ENCODE measurements at regions of chr17 and their contacts with region 1.

Region 1: DNA sequence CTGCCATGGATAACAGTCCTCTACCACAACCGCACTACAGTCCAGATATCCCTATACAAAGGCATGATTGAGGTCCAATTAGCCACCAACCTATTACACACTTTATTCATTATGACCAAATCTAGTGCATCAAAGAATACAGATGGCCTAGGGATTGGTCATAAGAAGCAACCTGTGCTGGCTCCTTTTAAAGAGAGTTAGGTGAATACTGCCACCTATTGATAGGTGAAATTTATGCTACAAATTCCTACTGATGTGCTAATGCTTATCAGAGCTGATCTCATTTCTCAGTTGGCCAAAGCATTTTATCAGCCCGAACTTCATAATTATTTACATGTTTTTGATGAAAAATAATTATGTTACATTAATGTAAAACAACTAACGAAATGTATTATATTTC is 166.2 kb downstream of the ANKFN1 start:
- DNase-seq: no peak
- ATAC-seq: peak; percentile 72 to 82
- H3K4me3 ChIP-seq: no peak overlapping the region
- H3K27ac ChIP-seq: no peak overlapping the region
- H3K4me1 ChIP-seq: no peaks in the 10 kb centered on the region
- H3K27me3 ChIP-seq: peaks cover 0 to 3% (median 0%) of the 10 kb centered on the region in 3 donors
- CTCF ChIP-seq: peak; percentile 24 to 65 (median 43)
- POLR2A ChIP-seq: no peak

Region 2: GRCh38 chr17:55845385-55845784 is 474.1 kb before region 1 on chr17:
- in situ Hi-C with region 1: loop called in 1 of 4 experiments (anchors 25 kb)
- intact Hi-C with region 1: loop called (anchors 2 kb)
- DNase-seq: peak; percentile 14 to 25
- ATAC-seq: peak; percentile 53 to 66
- H3K4me3 ChIP-seq: peak overlapping the region in 2 of 4 donors; percentile 31 to 35
- H3K27ac ChIP-seq: no peak overlapping the region
- H3K4me1 ChIP-seq: peaks cover 0 to 6% of the 10 kb centered on the region in 2 donors
- H3K27me3 ChIP-seq: no peaks in the 10 kb centered on the region
- CTCF ChIP-seq: peak in 4 of 5 experiments; percentile 14 to 58 (median 48)
- POLR2A ChIP-seq: no peak

Region 3: GRCh38 chr17:55852734-55853133 is 466.8 kb before region 1 on chr17:
- in situ Hi-C with region 1: loop called in 1 of 4 experiments (anchors 25 kb)
- intact Hi-C with region 1: no loop called
- DNase-seq: no peak
- ATAC-seq: no peak
- H3K4me3 ChIP-seq: no peak overlapping the region
- H3K27ac ChIP-seq: no peak overlapping the region
- H3K4me1 ChIP-seq: no peaks in the 10 kb centered on the region
- H3K27me3 ChIP-seq: no peaks in the 10 kb centered on the region
- CTCF ChIP-seq: no peak
- POLR2A ChIP-seq: no peak

Region 4: GRCh38 chr17:56125830-56126819 is 193.4 kb before region 1 on chr17:
- in situ Hi-C with region 1: loop called in 3 of 4 experiments (anchors 10 to 25 kb)
- intact Hi-C with region 1: loop called (anchors 1 kb)
- DNase-seq: no peak
- ATAC-seq: no peak
- H3K4me3 ChIP-seq: no peak overlapping the region
- H3K27ac ChIP-seq: no peak overlapping the region
- H3K4me1 ChIP-seq: no peaks in the 10 kb centered on the region
- H3K27me3 ChIP-seq: no peaks in the 10 kb centered on the region
- CTCF ChIP-seq: peak; percentile 24 to 53 (median 37)
- POLR2A ChIP-seq: no peak

Region 5: GRCh38 chr17:56165072-56165651 is 154.4 kb before region 1 on chr17:
- in situ Hi-C with region 1: no loop called
- intact Hi-C with region 1: no loop called
- DNase-seq: no peak
- ATAC-seq: peak in 1 of 2 donors; percentile 19
- H3K4me3 ChIP-seq: no peak overlapping the region
- H3K27ac ChIP-seq: no peak overlapping the region
- H3K4me1 ChIP-seq: peaks cover 7 to 8% of the 10 kb centered on the region in 2 donors
- H3K27me3 ChIP-seq: no peaks in the 10 kb centered on the region
- CTCF ChIP-seq: no peak
- POLR2A ChIP-seq: no peak

Region 6: GRCh38 chr17:56244268-56244890 is 75.1 kb before region 1 on chr17:
- in situ Hi-C with region 1: no loop called
- intact Hi-C with region 1: no loop called
- DNase-seq: no peak
- ATAC-seq: no peak
- H3K4me3 ChIP-seq: no peak overlapping the region
- H3K27ac ChIP-seq: no peak overlapping the region
- H3K4me1 ChIP-seq: no peaks in the 10 kb centered on the region
- H3K27me3 ChIP-seq: no peaks in the 10 kb centered on the region
- CTCF ChIP-seq: no peak
- POLR2A ChIP-seq: no peak

Region 7: DNA sequence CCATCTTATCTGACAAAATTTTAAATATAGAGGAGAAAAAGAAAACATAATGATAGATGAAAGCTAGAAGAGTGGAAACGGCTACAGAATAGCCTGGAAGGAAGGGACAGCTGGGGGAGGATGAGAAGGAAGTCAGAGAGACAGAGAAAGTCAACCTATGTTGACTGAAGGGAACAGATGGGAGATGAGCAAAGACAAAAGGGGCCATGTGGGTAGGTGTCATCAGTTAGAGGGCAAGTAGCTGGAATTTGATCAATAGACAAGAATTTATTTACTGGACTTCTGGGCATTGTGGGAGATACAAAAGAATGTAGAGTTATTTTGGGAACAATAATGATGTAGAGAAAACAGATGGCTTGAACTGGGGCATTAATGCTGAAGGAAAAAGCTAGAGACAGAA is 28.1 kb after region 1 on chr17:
- in situ Hi-C with region 1: no loop called
- intact Hi-C with region 1: no loop called
- DNase-seq: no peak
- ATAC-seq: no peak
- H3K4me3 ChIP-seq: no peak overlapping the region
- H3K27ac ChIP-seq: no peak overlapping the region
- H3K4me1 ChIP-seq: no peaks in the 10 kb centered on the region
- H3K27me3 ChIP-seq: no peaks in the 10 kb centered on the region
- CTCF ChIP-seq: no peak
- POLR2A ChIP-seq: no peak

Region 8: DNA sequence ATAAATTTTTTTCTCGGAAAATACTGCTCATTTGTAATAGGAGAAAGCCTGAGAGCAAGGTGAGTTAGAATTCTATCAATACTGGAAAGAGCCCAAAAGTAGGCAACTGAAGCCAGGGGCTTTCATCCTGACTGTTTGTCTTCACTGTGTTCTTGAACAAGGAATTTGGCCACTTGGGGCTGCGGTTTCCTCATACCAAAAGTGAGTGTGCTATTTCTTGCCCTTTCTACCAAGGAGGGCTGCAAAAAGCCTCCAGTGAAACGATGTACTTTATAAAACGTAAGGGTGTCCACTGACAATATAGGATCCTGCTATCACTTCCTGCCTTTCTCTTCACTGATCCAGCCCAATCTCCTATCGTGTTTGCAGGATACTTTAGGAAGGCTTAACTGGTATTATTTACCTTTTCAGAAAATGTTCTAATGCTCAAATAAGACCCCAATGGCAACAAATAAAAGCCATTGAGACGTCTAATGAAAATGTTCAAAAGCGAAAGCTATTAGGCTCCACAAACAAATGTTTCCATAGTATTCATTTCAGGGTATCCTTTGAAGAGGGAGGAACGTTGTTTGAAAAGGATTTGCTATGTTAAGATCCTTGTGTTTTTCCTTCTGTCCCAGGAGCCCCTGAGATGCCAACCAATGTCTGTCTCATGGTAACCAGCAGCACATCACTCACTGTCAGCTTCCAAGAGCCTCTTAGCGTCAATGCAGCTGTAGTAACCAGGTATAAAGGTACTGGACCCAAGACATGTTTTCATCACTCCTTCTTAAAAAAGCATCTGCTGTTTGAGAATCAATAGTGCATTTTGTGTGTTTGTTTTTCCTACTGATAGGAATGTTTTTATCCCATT is 54.7 kb after region 1 on chr17:
- in situ Hi-C with region 1: no loop called
- intact Hi-C with region 1: no loop called
- DNase-seq: no peak
- ATAC-seq: no peak
- H3K4me3 ChIP-seq: no peak overlapping the region
- H3K27ac ChIP-seq: no peak overlapping the region
- H3K4me1 ChIP-seq: no peaks in the 10 kb centered on the region
- H3K27me3 ChIP-seq: no peaks in the 10 kb centered on the region
- CTCF ChIP-seq: no peak
- POLR2A ChIP-seq: no peak

Measured in gastrocnemius medialis (tissue), 4 donors.